Gastrocnemius medialis (tissue), 4 donors: ENCODE measurements at regions of chr16 and their contacts with region 1.

Region 1: DNA sequence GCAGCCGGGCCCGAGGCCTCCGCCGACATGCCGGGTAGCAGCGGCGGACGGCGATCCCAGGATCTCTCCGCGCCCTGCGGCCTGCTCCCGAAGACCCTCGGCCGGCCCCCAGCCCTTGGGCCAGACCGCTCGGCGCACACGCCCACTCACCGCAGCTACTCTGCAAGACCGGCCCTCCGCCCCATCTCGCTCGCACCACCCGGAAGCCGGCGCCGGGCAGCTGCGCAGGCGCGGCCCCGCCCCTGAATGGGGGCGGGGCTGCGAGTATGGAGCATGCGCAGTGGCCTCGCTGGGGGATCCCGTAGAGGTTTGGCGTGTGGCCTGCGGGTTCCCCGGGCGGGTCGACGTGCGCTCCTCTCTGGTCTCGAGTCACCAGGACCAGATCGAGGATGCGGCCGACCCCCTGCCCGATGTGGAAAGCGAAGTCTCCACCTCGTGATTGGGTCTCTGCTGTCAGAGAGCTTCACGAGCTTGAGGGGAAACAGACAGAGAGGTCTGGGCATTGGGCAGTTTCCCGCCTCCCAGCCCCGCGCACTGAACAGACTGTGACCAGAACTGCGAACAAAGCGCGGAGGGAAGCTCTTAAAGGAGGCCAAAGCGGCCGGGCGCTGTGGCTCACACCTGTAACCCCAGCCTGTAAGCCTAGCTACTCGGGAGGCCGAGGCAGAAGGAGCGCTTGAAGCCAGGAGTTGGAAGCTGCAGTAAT is at the start of gene KCTD13:
- DNase-seq: peak; percentile 63 to 73
- ATAC-seq: peak; percentile 94
- H3K4me3 ChIP-seq: peak within 1 kb of the TSS; percentile 75 to 99 (median 97)
- H3K27ac ChIP-seq: peak within 1 kb of the TSS; percentile 88 to 96 (median 89)
- H3K4me1 ChIP-seq: peaks cover 22 to 25% of the 10 kb centered on the region in 2 donors
- H3K27me3 ChIP-seq: no peaks in the 10 kb centered on the region
- CTCF ChIP-seq: no peak
- POLR2A ChIP-seq: peak; percentile 71 to 75
- total RNA-seq, gene KCTD13: 3.7 to 8.6 (median 6.3) TPM

Region 2: GRCh38 chr16:29805378-29806098 is 120.6 kb before region 1 on chr16:
- in situ Hi-C with region 1: no loop called
- intact Hi-C with region 1: loop called (anchors 5 kb)
- DNase-seq: peak; percentile 97
- ATAC-seq: peak; percentile 74 to 75
- H3K4me3 ChIP-seq: peak overlapping the region; percentile 61 to 92 (median 80)
- H3K27ac ChIP-seq: peak overlapping the region; percentile 87 to 99 (median 96)
- H3K4me1 ChIP-seq: peaks cover 41 to 44% of the 10 kb centered on the region in 2 donors
- H3K27me3 ChIP-seq: no peaks in the 10 kb centered on the region
- CTCF ChIP-seq: peak in 1 of 5 experiments; percentile 39
- POLR2A ChIP-seq: peak; percentile 93 to 95

Region 3: GRCh38 chr16:29816694-29817441 is 109.3 kb before region 1 on chr16:
- in situ Hi-C with region 1: no loop called
- intact Hi-C with region 1: no loop called
- DNase-seq: peak in 1 of 2 donors; percentile 47
- ATAC-seq: peak; percentile 9 to 11
- H3K4me3 ChIP-seq: peak overlapping the region; percentile 78 to 96 (median 90)
- H3K27ac ChIP-seq: peak overlapping the region; percentile 91 to 99 (median 95)
- H3K4me1 ChIP-seq: peaks cover 51 to 56% of the 10 kb centered on the region in 2 donors
- H3K27me3 ChIP-seq: no peaks in the 10 kb centered on the region
- CTCF ChIP-seq: no peak
- POLR2A ChIP-seq: no peak

Region 4: DNA sequence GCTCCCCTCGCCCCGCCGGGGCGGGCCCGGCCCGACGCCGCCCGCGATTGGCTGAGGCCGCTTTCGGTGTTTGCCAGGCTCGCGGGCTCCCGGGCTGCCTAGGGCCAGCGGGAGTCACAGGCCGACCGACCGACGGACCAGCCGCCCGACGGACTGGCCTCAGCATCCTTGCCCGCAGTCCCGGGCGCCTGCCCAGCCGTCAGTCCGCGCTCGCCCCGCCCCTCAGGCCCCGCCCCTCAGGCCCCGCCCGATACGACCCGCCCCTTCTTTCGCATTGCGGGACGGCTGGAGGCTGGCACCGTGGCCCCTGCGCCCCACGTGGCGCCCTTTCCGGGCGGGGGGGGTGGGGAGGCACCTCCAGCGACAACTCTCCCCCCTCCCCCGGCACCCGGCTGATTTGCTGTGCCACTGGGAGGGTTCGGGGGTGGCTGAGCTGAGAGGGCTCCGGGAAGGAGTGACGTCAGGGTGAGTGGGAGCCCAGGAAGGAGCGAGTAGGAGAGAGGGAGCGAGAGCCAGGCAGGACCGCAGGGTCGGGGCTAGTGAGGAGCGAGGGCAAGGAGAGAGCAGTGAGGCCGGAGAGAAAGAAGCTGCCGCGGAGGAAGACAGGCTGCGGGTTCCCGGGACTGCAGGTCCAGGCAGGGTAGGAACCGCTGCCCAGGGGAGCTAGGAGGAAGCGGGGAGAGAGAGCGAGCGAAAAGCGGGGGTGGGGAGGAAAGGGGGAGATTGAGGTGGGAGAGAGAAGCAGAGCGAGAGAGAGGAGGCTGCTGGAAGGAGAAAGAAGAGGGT is 25.9 kb before region 1 on chr16 and contains the start of gene ASPHD1:
- in situ Hi-C with region 1: no loop called
- intact Hi-C with region 1: loop called (anchors 1 kb)
- DNase-seq: peak in 1 of 2 donors; percentile 17
- ATAC-seq: peak; percentile 81 to 86
- H3K4me3 ChIP-seq: peak within 1 kb of the TSS; percentile 45 to 62 (median 58)
- H3K27ac ChIP-seq: no peak within 1 kb of the TSS
- H3K4me1 ChIP-seq: peaks cover 0 to 5% of the 10 kb centered on the region in 2 donors
- H3K27me3 ChIP-seq: peaks cover 35 to 42% (median 38%) of the 10 kb centered on the region in 3 donors
- CTCF ChIP-seq: no peak
- POLR2A ChIP-seq: no peak
- total RNA-seq, gene ASPHD1: not detected

Region 5: DNA sequence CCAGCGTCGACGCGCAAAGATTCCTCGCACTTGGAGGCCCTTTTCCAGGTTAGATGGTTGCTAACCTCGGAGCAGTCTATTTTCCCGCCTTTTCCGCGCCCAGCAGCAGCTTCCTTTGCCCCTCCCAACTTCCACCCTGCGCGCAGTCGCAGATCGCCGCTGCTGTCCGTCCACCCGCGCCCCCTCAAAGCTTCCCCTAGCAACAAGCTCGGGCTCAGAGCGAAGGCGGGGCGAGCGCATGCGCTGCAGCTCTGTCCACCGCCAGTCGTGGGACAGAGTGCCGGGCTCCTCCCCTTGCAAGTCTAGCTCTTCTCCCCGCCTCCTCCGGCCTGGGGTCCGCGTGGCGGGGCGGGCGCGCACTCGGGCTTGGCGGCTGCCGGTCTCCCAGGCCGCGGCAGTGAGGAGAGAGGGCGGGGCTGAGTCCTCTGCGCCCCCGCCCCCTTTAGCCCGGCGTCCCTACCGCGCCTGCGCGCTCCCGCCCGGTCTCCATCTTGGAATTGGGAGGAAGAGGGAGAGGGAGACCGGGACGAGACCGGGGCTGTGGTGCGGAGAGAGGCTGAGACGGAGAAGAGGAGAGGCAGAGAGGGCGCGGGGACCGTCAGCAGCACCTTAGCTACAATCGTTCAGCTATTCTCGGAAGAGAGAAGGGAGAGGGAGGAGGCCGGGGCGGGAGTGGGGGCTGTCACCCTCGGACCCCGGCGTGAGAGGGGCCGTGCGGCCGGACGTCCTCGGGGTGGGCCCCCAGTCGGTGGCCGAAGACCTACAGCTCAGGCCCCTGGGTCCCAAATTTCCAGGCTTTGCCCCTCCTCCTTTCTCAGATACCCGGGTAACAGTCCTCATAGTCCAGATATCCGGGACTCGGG is 47.5 kb after region 1 on chr16 and contains the start of gene TAOK2:
- in situ Hi-C with region 1: loop called in 1 of 4 experiments (anchors 10 kb)
- intact Hi-C with region 1: loop called (anchors 2 kb)
- DNase-seq: peak; percentile 97 to 99
- ATAC-seq: peak; percentile 91 to 94
- H3K4me3 ChIP-seq: peak within 1 kb of the TSS; percentile 90 to 99 (median 94)
- H3K27ac ChIP-seq: peak within 1 kb of the TSS; percentile 94 to 100 (median 98)
- H3K4me1 ChIP-seq: peaks cover 26 to 28% of the 10 kb centered on the region in 2 donors
- H3K27me3 ChIP-seq: no peaks in the 10 kb centered on the region
- CTCF ChIP-seq: no peak
- POLR2A ChIP-seq: peak; percentile 83 to 86
- total RNA-seq, gene TAOK2: 15.9 to 31.0 (median 22.1) TPM

Region 6: DNA sequence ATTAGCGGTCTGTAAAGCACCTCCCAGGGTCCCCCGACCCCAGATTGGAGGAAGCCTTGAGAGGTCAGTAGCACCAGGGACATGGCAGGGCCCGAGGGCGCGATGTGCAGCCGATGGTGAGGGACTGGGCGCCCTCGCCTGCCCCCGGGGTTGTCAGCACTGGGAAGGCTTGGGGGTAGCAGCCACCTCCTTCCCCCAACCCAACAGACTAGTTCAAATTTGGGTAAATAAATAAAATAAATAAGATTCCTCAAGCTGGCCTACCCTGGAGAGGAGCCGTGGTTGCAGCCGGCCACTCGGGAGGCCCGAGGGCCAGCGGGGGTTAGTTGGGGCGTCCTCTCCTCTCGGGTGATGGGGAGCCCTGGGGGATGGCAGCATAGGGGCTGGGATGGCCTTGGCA is 98.3 kb after region 1 on chr16:
- in situ Hi-C with region 1: no loop called
- intact Hi-C with region 1: loop called (anchors 5 kb)
- DNase-seq: no peak
- ATAC-seq: no peak
- H3K4me3 ChIP-seq: no peak overlapping the region
- H3K27ac ChIP-seq: no peak overlapping the region
- H3K4me1 ChIP-seq: peaks cover 3 to 5% of the 10 kb centered on the region in 2 donors
- H3K27me3 ChIP-seq: peaks cover 0 to 14% (median 5%) of the 10 kb centered on the region in 3 donors
- CTCF ChIP-seq: no peak
- POLR2A ChIP-seq: no peak